H1 (cell line): ENCODE measurements at regions of chr19 and their contacts with region 1.

Region 1: GRCh38 chr19:10332955-10333757 is at the start of gene RAVER1:
- DNase-seq: peak; percentile 84 to 94
- H3K4me3 ChIP-seq: peak within 1 kb of the TSS; percentile 75 to 96 (median 90)
- H3K27ac ChIP-seq: peak within 1 kb of the TSS; percentile 76
- H3K4me1 ChIP-seq: peaks cover 0 to 19% (median 7%) of the 10 kb centered on the region in 4 experiments; a peak in 6 of 7 replicates
- H3K27me3 ChIP-seq: peaks cover 0 to 3% (median 0%) of the 10 kb centered on the region in 4 experiments; a peak in 2 of 7 replicates
- CTCF ChIP-seq: no peak
- EP300 ChIP-seq: peak in 1 of 2 experiments; percentile 90; a peak in 2 of 3 replicates
- POLR2A ChIP-seq: peak in 1 of 2 experiments; percentile 78; a peak in 1 of 3 replicates
- RAD21 ChIP-seq: no peak
- total RNA-seq, gene RAVER1: 70.5 and 72.4 TPM in 2 replicates

Region 2: GRCh38 chr19:10269333-10270179 is 63.6 kb before region 1 on chr19:
- CTCF ChIA-PET with region 1: interaction called, 6 read pairs
- POLR2A ChIA-PET with region 1: interaction called, 19 read pairs
- DNase-seq: peak in 1 of 2 experiments; percentile 99
- H3K4me3 ChIP-seq: peak overlapping the region; percentile 30 to 59 (median 38); a peak in 5 of 8 replicates
- H3K27ac ChIP-seq: no peak overlapping the region
- H3K4me1 ChIP-seq: peaks cover 0 to 8% (median 5%) of the 10 kb centered on the region in 4 experiments; a peak in 5 of 7 replicates
- H3K27me3 ChIP-seq: peaks cover 9 to 25% (median 23%) of the 10 kb centered on the region in 4 experiments
- CTCF ChIP-seq: peak; percentile 79 to 95 (median 88)
- EP300 ChIP-seq: no peak; a peak in 1 of 3 replicates
- POLR2A ChIP-seq: no peak
- RAD21 ChIP-seq: peak; percentile 94 to 97

Region 3: DNA sequence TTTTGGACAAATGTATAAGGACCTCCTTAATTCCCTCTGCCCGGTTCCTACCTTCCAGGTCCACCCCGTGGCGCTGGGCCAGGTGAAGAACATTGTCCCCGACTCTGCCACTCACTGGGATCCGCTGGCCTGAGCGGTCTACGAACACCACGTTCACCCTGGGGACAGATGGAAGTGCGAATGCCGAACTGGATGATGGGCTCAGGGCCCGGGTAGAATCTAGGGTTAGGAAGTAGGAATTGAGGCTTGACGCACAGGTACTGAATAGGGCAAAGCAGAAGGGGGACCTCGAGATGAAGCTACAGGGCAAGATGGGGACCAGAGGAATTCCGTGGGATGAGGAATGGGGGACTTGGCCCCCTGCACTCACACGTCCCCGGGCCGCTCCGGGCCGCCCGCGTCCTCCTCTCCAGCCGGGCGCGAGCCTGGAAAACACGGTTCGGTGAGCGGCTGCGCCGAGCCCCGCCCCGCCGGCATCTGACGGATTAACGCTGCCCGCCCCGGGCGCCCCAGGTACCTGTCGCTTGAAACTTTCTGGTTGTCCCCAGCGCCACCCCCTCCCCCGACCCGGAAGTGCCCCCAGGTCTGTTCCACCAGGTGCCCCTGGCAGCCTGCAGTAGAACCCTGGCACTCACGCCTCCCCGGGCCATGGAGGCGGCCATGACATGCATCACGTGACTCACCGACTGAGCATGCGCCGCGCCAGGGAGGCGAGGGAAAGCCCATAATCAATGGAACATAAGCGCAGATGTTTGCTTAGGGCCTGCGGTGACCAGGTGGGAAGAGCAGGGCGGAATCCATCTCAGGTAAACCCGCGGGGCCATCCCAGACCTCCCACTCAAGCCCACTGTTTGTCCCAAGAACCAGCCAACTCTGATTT is 17.6 kb before region 1 on chr19 and contains the start of gene FDX2:
- CTCF ChIA-PET with region 1: interaction called, 5 read pairs
- POLR2A ChIA-PET with region 1: interaction called, 104 read pairs
- DNase-seq: peak; percentile 79 to 97
- H3K4me3 ChIP-seq: peak within 1 kb of the TSS; percentile 80 to 94 (median 92)
- H3K27ac ChIP-seq: peak within 1 kb of the TSS; percentile 72
- H3K4me1 ChIP-seq: no peaks in the 10 kb centered on the region; a peak in 1 of 7 replicates
- H3K27me3 ChIP-seq: no peaks in the 10 kb centered on the region
- CTCF ChIP-seq: no peak
- EP300 ChIP-seq: no peak
- POLR2A ChIP-seq: peak; percentile 78 to 91
- RAD21 ChIP-seq: peak in 1 of 2 experiments; percentile 4; a peak in 1 of 4 replicates
- total RNA-seq, gene FDX2: 27.0 and 27.8 TPM in 2 replicates

Region 4: DNA sequence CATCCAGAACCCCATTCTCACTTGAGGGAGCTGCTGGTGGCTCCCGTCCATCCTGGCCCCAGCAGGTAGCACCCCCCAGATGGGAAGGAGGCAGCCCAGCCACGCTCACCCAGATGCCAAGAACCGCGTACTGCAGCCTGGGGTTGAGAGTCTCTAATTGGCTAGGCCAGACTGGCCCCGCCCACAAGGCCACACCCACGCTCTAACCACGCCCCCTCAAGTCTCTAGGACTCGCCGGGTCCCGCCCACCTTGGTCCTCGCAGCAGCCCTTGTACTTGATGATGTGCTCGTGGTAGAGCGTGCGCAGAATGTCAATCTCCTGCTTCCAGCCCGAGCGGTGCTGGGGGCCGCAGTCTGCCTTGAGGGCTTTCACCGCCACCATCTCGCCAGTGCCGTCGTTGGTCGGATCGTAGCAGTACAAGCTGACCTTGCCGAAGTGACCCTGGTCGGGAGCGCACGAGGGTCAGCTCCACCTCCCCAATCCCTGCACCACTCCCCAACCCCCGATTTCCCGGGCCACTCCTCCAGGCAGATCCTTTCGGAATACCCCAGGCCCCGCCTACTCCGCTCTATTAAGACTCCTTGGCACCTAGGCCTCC is 20.7 kb after region 1 on chr19:
- CTCF ChIA-PET with region 1: interaction called, 11 read pairs
- POLR2A ChIA-PET with region 1: interaction called, 15 read pairs
- DNase-seq: peak; percentile 91 to 99
- H3K4me3 ChIP-seq: peak overlapping the region; percentile 61 to 69 (median 64)
- H3K27ac ChIP-seq: peak overlapping the region; percentile 68
- H3K4me1 ChIP-seq: peaks cover 0 to 11% (median 8%) of the 10 kb centered on the region in 4 experiments; a peak in 5 of 7 replicates
- H3K27me3 ChIP-seq: no peaks in the 10 kb centered on the region
- CTCF ChIP-seq: peak in 1 of 3 experiments; percentile 2; a peak in 1 of 4 replicates
- EP300 ChIP-seq: no peak; a peak in 1 of 3 replicates
- POLR2A ChIP-seq: peak in 1 of 2 experiments; percentile 79; a peak in 1 of 3 replicates
- RAD21 ChIP-seq: no peak

Region 5: GRCh38 chr19:10380313-10381102 is 47.4 kb after region 1 on chr19 and contains the start of gene TYK2:
- CTCF ChIA-PET with region 1: interaction called, 21 read pairs
- POLR2A ChIA-PET with region 1: interaction called, 16 read pairs
- DNase-seq: peak; percentile 97 to 98
- H3K4me3 ChIP-seq: peak within 1 kb of the TSS; percentile 73 to 92 (median 87)
- H3K27ac ChIP-seq: peak within 1 kb of the TSS; percentile 97
- H3K4me1 ChIP-seq: peaks cover 0 to 5% (median 1%) of the 10 kb centered on the region in 4 experiments; a peak in 1 of 7 replicates
- H3K27me3 ChIP-seq: no peaks in the 10 kb centered on the region
- CTCF ChIP-seq: no peak
- EP300 ChIP-seq: no peak
- POLR2A ChIP-seq: peak; percentile 88 to 98
- RAD21 ChIP-seq: no peak
- total RNA-seq, gene TYK2: 40.8 and 42.7 TPM in 2 replicates